ENCODE measurements at regions of chr2 and their contacts with region 1.

Region 1: GRCh38 chr2:171999604-172000469 is at the start of gene METAP1D:
- DNase-seq: peak; percentile 97
- H3K4me3 Mint-ChIP-seq: peak within 1 kb of the TSS; percentile 94
- H3K27ac Mint-ChIP-seq: peak within 1 kb of the TSS; percentile 100
- H3K4me1 Mint-ChIP-seq: peaks cover 19% of the 10 kb centered on the region
- H3K27me3 Mint-ChIP-seq: peaks cover 23% of the 10 kb centered on the region
- total RNA-seq, gene METAP1D: 5.0 and 8.1 TPM in 2 replicates

Region 2: DNA sequence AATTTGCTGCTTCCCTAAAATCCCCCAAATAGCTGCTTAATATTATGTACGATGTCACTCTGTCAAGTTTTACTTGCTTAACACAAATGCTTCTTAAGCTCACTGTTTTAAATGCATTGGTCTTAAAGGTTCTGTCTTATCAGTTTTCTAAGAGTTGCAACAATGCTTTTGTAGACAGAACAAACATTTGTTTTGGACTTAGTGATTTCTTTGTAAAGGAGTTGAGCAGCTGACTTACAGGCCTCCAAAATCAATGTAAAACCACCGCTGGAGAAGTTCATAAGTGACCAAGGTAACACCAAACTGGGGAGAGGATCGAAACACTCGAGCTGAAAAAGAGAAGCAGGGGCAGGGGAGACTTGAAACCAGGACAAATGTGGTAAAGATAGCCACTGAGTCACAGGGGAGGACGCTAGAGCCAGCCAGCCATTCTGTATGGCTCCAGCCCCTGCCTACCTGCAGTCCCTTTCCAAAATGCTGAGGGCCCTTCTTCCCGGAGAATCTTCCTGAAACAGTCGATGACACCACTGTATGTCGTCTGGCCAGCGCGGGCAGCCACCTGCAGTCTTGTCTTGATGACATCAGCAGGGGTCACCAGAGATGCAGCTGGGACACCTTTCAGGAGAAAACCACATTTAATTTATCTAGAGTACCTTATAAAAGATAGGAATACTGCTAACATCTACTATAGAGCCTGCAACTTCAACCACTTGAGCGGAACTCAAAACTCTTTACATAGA is 212.3 kb before region 1 on chr2:
- intact Hi-C with region 1: no loop called
- DNase-seq: no peak
- H3K4me3 Mint-ChIP-seq: no peak overlapping the region
- H3K27ac Mint-ChIP-seq: no peak overlapping the region
- H3K4me1 Mint-ChIP-seq: no peaks in the 10 kb centered on the region
- H3K27me3 Mint-ChIP-seq: no peaks in the 10 kb centered on the region

Region 3: DNA sequence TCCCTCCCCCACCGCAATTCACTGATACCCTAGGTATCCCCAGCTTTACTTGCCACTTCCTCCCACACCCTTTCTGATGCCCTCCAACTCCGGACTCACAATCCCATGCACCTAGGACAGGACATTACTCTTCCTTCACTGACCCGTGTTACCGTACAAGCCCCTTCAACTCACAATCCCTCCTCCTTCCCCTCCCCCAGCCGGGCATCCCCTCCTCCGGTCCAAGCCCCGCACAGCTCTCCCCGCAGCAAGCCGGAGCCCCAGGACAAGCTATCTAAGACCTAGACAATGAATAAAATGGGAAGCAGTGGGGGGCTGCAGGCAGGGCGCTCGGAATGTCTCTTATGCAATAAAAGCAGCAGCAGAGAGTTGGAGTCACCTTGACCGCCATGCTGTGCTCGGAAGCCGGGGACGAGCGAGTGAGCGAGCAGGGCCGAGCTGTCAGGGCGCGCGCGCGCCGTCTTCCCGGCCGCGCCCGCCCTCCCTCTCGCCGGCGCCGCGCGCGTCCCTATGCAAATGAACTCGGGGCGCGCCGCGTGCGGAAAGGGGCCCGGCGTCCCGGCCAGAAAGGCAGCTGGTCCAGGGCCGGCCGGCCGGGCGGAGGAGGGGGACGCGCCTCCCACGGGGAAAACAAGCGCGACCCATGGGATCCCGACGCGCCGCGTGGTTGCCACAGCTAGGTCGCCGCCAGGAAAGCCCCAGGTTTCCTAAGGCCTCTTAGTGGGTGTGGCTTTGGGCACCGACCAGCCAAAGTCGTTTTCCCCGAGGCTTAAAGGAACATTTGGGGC is 105.8 kb before region 1 on chr2 and contains the start of gene SLC25A12:
- intact Hi-C with region 1: loop called (anchors 2 kb)
- DNase-seq: peak; percentile 94
- H3K4me3 Mint-ChIP-seq: peak within 1 kb of the TSS; percentile 95
- H3K27ac Mint-ChIP-seq: peak within 1 kb of the TSS; percentile 92
- H3K4me1 Mint-ChIP-seq: peaks cover 40% of the 10 kb centered on the region
- H3K27me3 Mint-ChIP-seq: peaks cover 2% of the 10 kb centered on the region
- total RNA-seq, gene SLC25A12: 30.9 and 34.3 TPM in 2 replicates

Region 4: DNA sequence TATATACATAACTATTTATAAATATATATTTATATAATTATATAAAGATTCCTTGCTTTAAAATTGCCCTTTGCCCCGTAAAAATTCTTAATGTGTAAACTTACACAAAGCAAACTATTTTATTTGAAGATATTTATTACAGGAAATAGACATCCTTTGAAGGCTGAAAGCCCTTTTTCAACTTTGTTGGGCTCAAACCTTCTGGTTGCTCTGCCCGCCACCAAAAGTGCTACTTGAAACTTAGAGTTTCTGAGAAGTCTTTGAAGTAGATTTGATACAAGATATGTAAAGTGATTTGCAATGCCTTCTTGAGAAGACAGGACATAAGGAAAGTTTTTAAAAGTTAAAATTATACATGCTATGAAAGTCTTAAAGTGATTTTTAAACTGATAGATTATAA is 36.6 kb before region 1 on chr2:
- intact Hi-C with region 1: loop called (anchors 5 kb)
- DNase-seq: peak; percentile 69
- H3K4me3 Mint-ChIP-seq: peak overlapping the region; percentile 15
- H3K27ac Mint-ChIP-seq: no peak overlapping the region
- H3K4me1 Mint-ChIP-seq: peaks cover 23% of the 10 kb centered on the region
- H3K27me3 Mint-ChIP-seq: no peaks in the 10 kb centered on the region

Region 5: DNA sequence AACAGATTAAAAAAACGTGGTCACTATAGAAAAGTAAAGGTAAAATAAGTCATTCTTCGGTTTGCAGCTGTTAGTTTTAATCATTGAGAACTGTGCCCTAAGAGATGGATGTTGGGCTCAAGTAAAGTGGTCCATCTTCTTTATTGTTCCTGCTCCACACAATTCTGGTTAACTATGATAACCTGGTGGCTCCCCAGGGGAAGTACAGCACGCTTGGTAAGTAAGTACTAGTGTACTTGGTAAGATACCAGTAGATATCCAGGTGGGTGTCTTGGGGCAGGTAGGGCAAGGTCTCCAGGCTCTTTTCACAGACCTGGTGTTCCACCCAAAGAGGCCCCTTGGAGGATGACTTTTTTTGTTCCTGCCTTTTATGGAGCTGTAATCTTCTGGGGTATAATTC is 134.4 kb after region 1 on chr2:
- intact Hi-C with region 1: no loop called
- DNase-seq: no peak
- H3K4me3 Mint-ChIP-seq: no peak overlapping the region
- H3K27ac Mint-ChIP-seq: no peak overlapping the region
- H3K4me1 Mint-ChIP-seq: no peaks in the 10 kb centered on the region
- H3K27me3 Mint-ChIP-seq: peaks cover 23% of the 10 kb centered on the region